Mammary epithelial cell (primary cell): ENCODE measurements at regions of chr7 and their contacts with region 1.

Region 1: DNA sequence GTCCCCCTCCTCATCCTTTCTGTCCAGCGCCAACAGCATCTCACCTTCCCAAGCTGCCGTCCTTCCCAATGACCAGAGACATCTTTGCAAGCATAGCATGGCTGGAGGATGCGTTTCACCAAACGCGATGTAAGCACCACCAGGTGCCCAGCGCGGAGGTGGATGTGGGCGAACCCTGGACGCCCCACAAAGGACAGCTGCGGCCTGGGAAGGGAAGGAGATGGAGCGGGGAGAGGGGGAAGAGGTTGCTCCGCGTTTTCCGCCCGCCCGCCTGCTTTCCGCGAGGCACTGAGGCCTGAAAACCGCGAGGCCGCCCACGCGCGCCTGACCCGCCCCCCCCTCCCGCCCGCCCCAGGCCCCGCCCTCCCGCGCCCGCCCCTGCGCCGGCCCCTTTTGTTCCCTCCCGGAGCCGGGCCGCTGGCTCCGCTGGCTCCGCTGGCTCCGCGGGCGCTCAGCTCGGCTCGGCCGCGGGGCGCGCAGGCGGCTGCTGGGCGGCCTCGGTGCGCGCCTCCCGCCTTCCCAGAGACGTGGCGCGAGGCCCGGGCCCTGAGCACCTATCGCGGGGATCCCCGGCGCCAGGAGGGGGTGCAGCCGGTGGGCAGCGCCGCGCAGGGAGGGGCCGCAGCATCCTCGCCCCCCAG is at the start of gene CLIP2:
- DNase-seq: peak; percentile 76
- H3K4me3 ChIP-seq: peak within 1 kb of the TSS; percentile 57 to 92 (median 63)
- H3K27ac ChIP-seq: peak within 1 kb of the TSS; percentile 26
- H3K4me1 ChIP-seq: peaks cover 24% of the 10 kb centered on the region
- H3K27me3 ChIP-seq: no peaks in the 10 kb centered on the region
- CTCF ChIP-seq: no peak
- total RNA-seq, gene CLIP2: 34.3 to 37.9 TPM

Region 2: DNA sequence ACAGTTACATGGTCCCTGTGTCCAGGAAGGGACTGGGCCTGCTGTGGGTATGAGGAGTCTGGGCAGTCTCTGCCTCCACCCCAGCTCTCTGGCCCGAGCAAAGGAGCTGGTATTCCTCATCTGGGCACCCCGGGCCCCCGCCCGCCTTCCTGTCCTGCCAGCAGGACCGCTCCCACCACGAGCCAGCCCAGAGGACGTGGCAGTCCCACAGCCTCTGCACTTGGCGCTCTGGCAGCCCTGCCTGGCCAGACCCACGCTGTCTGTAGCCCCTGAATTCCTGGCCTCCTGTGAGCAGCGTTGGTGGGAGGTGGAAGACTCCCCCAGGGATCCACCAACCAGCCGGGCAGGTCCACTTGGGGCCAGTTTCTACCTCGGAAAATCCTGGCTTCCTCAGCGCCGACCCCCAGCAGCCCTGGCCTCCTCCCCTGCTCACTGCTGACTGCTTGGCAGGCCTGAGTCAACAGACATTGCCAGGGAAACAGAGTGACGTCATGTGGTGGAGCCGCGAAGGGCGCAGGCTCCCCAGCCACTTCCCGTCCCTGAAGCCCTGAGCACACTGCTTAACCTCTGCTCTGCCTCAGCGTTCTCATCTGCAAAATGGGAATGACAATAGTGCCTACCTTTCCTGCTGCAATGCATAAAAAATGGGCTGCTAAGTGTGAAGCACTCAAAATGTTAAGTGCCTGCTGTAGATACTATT is 227.1 kb before region 1 on chr7:
- CTCF ChIA-PET with region 1: no interaction called
- dilution Hi-C with region 1: loop called (anchors 5 kb)
- in situ Hi-C with region 1: no loop called
- intact Hi-C with region 1: no loop called
- DNase-seq: peak; percentile 84
- H3K4me3 ChIP-seq: no peak overlapping the region
- H3K27ac ChIP-seq: no peak overlapping the region
- H3K4me1 ChIP-seq: peaks cover 17% of the 10 kb centered on the region
- H3K27me3 ChIP-seq: no peaks in the 10 kb centered on the region
- CTCF ChIP-seq: no peak

Region 3: DNA sequence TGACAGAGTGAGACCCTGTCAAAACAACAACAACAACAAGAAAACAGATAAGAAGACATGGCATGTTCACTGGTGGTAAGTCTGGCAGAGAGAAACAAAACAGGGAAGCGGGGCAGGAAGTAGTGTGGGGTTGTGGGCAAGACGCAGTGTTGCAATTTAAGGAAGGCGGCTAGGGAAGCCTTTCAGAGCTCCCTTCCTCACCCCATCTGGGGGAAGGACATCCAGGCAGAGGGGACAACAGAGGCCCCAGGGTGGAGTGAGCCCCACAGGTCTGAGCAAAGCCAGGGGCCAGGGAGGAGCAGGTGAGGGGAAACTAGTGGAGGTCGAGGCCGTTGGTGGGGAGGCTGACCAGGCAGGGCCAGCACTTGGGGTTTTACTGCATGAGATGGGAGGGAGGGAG is 62.5 kb before region 1 on chr7:
- CTCF ChIA-PET with region 1: no interaction called
- dilution Hi-C with region 1: loop called (anchors 5 kb)
- in situ Hi-C with region 1: no loop called
- intact Hi-C with region 1: no loop called
- DNase-seq: no peak
- H3K4me3 ChIP-seq: no peak overlapping the region
- H3K27ac ChIP-seq: no peak overlapping the region
- H3K4me1 ChIP-seq: no peaks in the 10 kb centered on the region
- H3K27me3 ChIP-seq: no peaks in the 10 kb centered on the region
- CTCF ChIP-seq: no peak

Region 4: GRCh38 chr7:74254129-74254857 is 34.8 kb before region 1 on chr7 and contains the start of gene RFC2:
- CTCF ChIA-PET with region 1: no interaction called
- dilution Hi-C with region 1: loop called (anchors 5 kb)
- in situ Hi-C with region 1: no loop called
- intact Hi-C with region 1: loop called (anchors 5 kb)
- DNase-seq: peak; percentile 95
- H3K4me3 ChIP-seq: peak within 1 kb of the TSS; percentile 81 to 97 (median 88)
- H3K27ac ChIP-seq: peak within 1 kb of the TSS; percentile 91
- H3K4me1 ChIP-seq: peaks cover 8% of the 10 kb centered on the region
- H3K27me3 ChIP-seq: no peaks in the 10 kb centered on the region
- CTCF ChIP-seq: no peak
- total RNA-seq, gene RFC2: 15.0 to 43.9 TPM

Region 5: GRCh38 chr7:74355091-74355490 is 66.0 kb after region 1 on chr7:
- CTCF ChIA-PET with region 1: no interaction called
- dilution Hi-C with region 1: no loop called
- in situ Hi-C with region 1: no loop called
- intact Hi-C with region 1: loop called (anchors 5 kb)
- DNase-seq: peak; percentile 81
- H3K4me3 ChIP-seq: no peak overlapping the region
- H3K27ac ChIP-seq: no peak overlapping the region
- H3K4me1 ChIP-seq: peaks cover 4% of the 10 kb centered on the region
- H3K27me3 ChIP-seq: no peaks in the 10 kb centered on the region
- CTCF ChIP-seq: no peak

Region 6: GRCh38 chr7:74401137-74401859 is 112.2 kb after region 1 on chr7:
- CTCF ChIA-PET with region 1: no interaction called
- dilution Hi-C with region 1: loop called (anchors 10 kb)
- in situ Hi-C with region 1: loop called in 1 of 2 experiments (anchors 25 kb)
- intact Hi-C with region 1: no loop called
- DNase-seq: peak; percentile 42
- H3K4me3 ChIP-seq: no peak overlapping the region
- H3K27ac ChIP-seq: no peak overlapping the region
- H3K4me1 ChIP-seq: no peaks in the 10 kb centered on the region
- H3K27me3 ChIP-seq: no peaks in the 10 kb centered on the region
- CTCF ChIP-seq: peak; percentile 98